Lower leg skin (tissue), 4 donors: ENCODE measurements at regions of chrX and their contacts with region 1.

Region 1: DNA sequence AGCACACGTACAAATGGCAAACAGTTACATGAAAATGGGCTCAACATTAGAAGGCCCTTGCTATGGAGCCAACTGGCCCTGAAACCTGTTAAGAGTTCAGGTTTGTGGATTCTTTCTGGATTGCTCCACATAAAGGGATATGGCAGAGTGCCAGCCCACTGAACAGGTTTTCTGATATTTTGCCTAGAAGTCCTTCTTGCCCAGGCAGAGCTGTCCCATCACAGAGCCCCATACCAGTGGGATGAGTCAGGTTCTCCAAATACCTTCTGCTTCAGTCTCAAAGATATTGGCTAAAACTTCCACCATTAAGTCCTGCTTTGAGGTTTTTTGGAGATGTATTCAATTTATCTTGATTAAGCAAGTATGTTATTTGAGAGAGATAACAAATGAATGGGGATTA is 146.8 kb upstream of the IL1RAPL2 start:
- DNase-seq: peak in 1 of 2 donors; percentile 14
- H3K4me3 ChIP-seq: no peak overlapping the region
- CTCF ChIP-seq: no peak
- POLR2A ChIP-seq: no peak

Region 2: GRCh38 chrX:103656632-103657031 is 762.6 kb before region 1 on chrX:
- intact Hi-C with region 1: loop called (anchors 5 kb)
- DNase-seq: no peak
- H3K4me3 ChIP-seq: no peak overlapping the region
- CTCF ChIP-seq: no peak
- POLR2A ChIP-seq: no peak